ENCODE measurements at regions of chr4 and their contacts with region 1.

Region 1: DNA sequence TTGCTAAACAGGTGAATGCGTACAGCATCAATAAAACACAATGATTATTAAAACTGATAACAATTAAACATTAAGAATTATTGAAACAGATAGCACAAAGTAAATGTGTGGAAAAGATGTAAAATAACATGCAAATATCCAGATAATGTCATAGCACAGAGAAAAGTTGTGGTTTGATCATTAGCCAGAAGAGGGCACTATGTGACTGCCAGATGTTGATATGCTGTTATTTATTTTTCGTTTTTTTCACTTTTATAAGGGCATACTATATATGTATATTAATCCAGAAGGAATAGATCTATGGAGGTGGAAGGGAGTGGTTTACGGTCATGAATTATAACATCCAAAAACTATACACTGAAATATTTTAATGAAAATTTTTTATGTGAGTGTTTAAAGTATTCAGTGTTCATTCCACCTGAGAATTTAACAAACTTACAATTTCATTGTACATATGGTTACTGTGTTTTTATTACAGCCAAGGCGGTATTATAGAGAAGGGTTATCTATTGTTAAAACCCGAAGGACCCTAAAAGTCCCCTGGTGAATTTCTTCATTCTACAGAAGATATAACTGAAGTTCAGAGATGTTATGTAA is 211.9 kb upstream of the UGT8 start:
- DNase-seq: peak in 1 of 2 donors; percentile 47
- ATAC-seq: no peak
- H3K4me3 ChIP-seq: no peak overlapping the region
- H3K4me3 Mint-ChIP-seq: no peak overlapping the region
- H3K27ac ChIP-seq: no peak overlapping the region
- H3K27ac Mint-ChIP-seq: no peak overlapping the region
- H3K4me1 ChIP-seq: no peaks in the 10 kb centered on the region
- H3K4me1 Mint-ChIP-seq: no peaks in the 10 kb centered on the region
- H3K27me3 ChIP-seq: no peaks in the 10 kb centered on the region
- H3K27me3 Mint-ChIP-seq: peaks cover 0 to 7% of the 10 kb centered on the region in 2 donors
- CTCF ChIP-seq: peak; percentile 24

Region 2: DNA sequence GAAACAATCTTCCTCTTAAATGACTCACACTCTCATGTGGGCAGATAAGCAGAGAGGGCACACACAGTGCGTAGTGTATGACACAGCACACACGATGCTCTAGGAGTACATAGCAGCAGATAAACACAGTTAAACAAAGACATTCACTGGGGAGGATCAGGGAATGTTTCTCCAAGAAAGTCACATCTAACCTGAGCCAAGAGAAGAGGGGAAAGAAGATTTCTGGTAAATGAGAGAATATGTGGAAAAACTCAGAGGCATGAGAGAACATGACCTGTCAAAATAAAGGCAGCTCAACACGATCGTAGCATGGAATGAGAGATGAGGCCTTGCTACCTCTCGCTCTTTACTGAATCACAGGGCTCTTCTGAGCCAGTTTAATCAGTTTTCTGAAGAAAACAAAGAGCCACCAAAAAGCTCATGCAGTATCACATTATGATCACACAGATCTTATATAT is 1086.2 kb before region 1 on chr4:
- intact Hi-C with region 1: no loop called
- DNase-seq: no peak
- ATAC-seq: no peak
- H3K4me3 ChIP-seq: no peak overlapping the region
- H3K4me3 Mint-ChIP-seq: no peak overlapping the region
- H3K27ac ChIP-seq: no peak overlapping the region
- H3K27ac Mint-ChIP-seq: no peak overlapping the region
- H3K4me1 ChIP-seq: no peaks in the 10 kb centered on the region
- H3K4me1 Mint-ChIP-seq: no peaks in the 10 kb centered on the region
- H3K27me3 ChIP-seq: no peaks in the 10 kb centered on the region
- H3K27me3 Mint-ChIP-seq: no peaks in the 10 kb centered on the region
- CTCF ChIP-seq: no peak

Region 3: DNA sequence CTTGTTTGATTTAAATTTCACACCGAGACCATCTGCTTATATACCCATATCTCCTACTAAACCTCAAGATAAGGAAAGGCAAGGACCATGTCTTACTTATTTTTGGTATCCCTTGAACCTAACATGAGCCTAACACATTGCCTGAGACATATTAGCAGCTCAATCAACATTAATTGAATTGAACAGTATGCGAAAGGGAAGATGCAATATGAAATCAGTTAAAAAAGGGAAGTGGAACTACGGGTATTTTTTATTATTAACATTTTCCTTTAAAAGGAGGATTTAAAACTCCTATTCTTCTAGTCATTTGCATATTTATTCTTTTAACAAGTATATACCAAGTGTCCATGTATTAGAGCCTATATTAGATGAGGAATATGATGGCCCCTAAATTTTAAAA is 822.2 kb before region 1 on chr4:
- intact Hi-C with region 1: no loop called
- DNase-seq: no peak
- ATAC-seq: peak in 1 of 3 donors; percentile 16
- H3K4me3 ChIP-seq: no peak overlapping the region
- H3K4me3 Mint-ChIP-seq: peak overlapping the region; percentile 85
- H3K27ac ChIP-seq: peak overlapping the region; percentile 24
- H3K27ac Mint-ChIP-seq: peak overlapping the region; percentile 74 to 82
- H3K4me1 ChIP-seq: peaks cover 10% of the 10 kb centered on the region
- H3K4me1 Mint-ChIP-seq: peaks cover 34 to 37% of the 10 kb centered on the region in 2 donors
- H3K27me3 ChIP-seq: no peaks in the 10 kb centered on the region
- H3K27me3 Mint-ChIP-seq: peaks cover 10 to 15% of the 10 kb centered on the region in 2 donors
- CTCF ChIP-seq: no peak

Region 4: DNA sequence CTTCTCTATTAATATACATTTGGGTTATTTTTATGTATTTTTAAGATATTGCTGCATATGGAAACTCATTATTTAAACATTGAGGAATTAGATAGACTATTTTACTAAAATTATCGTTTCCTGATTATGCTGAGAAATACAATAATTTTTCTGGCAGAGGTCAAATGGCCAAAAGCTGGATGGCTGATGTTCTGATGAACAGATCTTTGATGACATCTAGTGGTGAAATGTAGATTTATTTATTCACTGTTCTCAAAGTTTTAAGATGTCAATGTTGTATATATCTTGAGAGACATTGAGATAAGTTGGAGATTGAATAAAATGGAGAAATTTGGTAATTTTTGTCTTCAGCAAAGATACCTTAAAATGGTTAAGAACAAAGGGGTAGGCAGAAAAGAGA is 308.0 kb after region 1 on chr4:
- intact Hi-C with region 1: loop called (anchors 5 kb)
- DNase-seq: peak in 1 of 2 donors; percentile 44
- ATAC-seq: no peak
- H3K4me3 ChIP-seq: no peak overlapping the region
- H3K4me3 Mint-ChIP-seq: no peak overlapping the region
- H3K27ac ChIP-seq: no peak overlapping the region
- H3K27ac Mint-ChIP-seq: no peak overlapping the region
- H3K4me1 ChIP-seq: no peaks in the 10 kb centered on the region
- H3K4me1 Mint-ChIP-seq: no peaks in the 10 kb centered on the region
- H3K27me3 ChIP-seq: no peaks in the 10 kb centered on the region
- H3K27me3 Mint-ChIP-seq: peaks cover 0 to 7% of the 10 kb centered on the region in 2 donors
- CTCF ChIP-seq: peak; percentile 60

Measured in natural killer cell (primary cell).